OCI-LY7 (cell line): ENCODE measurements at regions of chr11 and their contacts with region 1.

Region 1: GRCh38 chr11:68297812-68298658 is 14.4 kb upstream of the LRP5 start:
- DNase-seq: peak; percentile 73
- H3K4me3 ChIP-seq: no peak overlapping the region
- H3K27ac ChIP-seq: no peak overlapping the region
- H3K4me1 ChIP-seq: peaks cover 35% of the 10 kb centered on the region
- CTCF ChIP-seq: peak; percentile 95

Region 2: GRCh38 chr11:68213555-68214174 is 84.4 kb before region 1 on chr11:
- CTCF ChIA-PET with region 1: interaction called, 3 read pairs
- POLR2A ChIA-PET with region 1: interaction called, 3 read pairs
- intact Hi-C with region 1: loop called (anchors 5 kb)
- DNase-seq: peak; percentile 97
- H3K4me3 ChIP-seq: peak overlapping the region; percentile 82
- H3K27ac ChIP-seq: peak overlapping the region; percentile 73
- H3K4me1 ChIP-seq: peaks cover 30% of the 10 kb centered on the region
- CTCF ChIP-seq: no peak

Region 3: DNA sequence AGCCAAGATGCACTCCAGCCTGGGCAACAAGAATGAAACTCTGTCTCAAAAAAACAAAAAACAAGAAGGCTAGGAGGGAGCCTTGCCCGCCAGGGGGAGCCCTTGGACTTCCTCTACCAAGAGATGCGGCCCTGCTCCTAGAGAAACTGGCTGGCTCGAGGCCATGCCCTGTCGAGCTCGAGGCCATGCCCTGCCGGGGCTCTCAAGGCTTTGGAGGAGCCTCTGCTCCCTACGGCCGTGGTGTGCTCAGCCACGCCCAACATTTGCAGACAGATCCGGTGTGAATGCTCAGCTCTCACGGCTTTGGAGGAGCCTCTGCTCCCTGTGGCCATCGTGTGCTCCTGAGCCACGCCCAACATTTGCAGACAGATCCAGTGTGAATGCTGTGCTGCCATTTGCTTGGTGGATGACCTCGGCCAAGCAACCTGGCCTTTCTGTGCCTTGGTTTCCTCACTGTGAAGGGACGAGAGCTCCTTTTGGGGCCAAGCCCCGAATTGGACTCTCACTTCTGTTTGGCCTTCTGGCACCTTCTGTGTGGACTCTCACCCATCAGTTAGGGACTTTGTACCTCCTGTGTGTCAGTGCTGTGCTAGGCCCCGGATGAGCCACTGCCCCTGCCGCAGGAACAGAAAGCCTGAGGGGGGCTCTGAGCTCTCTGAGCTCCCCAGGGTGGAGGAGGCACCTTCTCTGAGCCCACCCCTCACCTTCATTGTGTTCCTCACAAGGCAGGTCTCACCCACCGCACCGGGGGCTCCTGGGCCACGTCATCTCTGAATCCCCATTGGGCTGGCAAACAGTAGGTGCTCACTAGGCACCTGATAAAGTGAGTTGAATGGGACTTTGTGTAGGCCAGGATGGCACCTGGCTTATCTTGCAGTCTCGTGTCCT is 40.3 kb before region 1 on chr11:
- CTCF ChIA-PET with region 1: interaction called, 26 read pairs
- POLR2A ChIA-PET with region 1: interaction called, 24 read pairs
- intact Hi-C with region 1: loop called (anchors 1 kb)
- DNase-seq: peak; percentile 93
- H3K4me3 ChIP-seq: no peak overlapping the region
- H3K27ac ChIP-seq: no peak overlapping the region
- H3K4me1 ChIP-seq: peaks cover 6% of the 10 kb centered on the region
- CTCF ChIP-seq: peak; percentile 87

Region 4: GRCh38 chr11:68271781-68272608 is 26.0 kb before region 1 on chr11 and contains the start of gene C11orf24:
- CTCF ChIA-PET with region 1: no interaction called
- POLR2A ChIA-PET with region 1: interaction called, 11 read pairs
- intact Hi-C with region 1: loop called (anchors 1 kb)
- DNase-seq: peak; percentile 98
- H3K4me3 ChIP-seq: peak within 1 kb of the TSS; percentile 83
- H3K27ac ChIP-seq: peak within 1 kb of the TSS; percentile 96
- H3K4me1 ChIP-seq: peaks cover 56% of the 10 kb centered on the region
- CTCF ChIP-seq: no peak
- total RNA-seq, gene C11orf24: 53.9 and 81.1 TPM in 2 replicates

Region 5: DNA sequence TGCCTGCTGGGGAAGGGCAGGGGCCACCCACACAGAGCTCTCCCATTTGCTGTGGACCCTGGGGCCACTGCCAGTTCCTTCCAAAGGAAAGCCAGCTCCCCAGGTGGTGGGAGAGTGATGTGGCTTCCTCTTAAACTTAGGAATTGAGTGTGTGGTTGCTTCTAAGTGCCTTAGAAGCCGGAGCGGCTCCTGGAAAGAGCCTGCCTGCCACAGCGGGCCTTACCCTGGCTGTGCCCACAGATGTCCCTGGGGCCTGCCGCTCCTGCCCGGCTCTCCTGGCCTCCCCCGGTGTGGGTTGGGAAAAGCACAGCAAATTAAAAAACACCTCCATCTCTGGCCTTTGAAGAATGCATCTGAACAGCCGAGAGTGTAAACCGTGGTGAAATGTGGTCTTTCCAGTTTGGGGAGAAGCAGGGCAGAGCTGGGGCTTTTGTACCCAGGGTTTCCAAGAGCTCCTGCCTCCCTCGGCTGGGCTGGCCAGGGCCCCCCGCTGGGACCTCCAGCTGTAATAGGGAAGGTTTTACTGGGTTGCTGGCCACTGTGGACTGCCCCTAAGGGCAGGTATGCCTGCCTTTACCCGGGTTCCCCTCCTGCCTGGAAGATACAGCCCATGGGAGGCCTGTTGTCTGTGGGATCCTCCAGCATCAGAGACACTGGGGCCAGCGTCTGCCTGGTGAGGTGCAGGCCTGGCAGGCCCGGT is 44.6 kb after region 1 on chr11:
- CTCF ChIA-PET with region 1: no interaction called
- POLR2A ChIA-PET with region 1: no interaction called
- intact Hi-C with region 1: no loop called
- DNase-seq: no peak
- H3K4me3 ChIP-seq: no peak overlapping the region
- H3K27ac ChIP-seq: no peak overlapping the region
- H3K4me1 ChIP-seq: no peaks in the 10 kb centered on the region
- CTCF ChIP-seq: no peak

Region 6: DNA sequence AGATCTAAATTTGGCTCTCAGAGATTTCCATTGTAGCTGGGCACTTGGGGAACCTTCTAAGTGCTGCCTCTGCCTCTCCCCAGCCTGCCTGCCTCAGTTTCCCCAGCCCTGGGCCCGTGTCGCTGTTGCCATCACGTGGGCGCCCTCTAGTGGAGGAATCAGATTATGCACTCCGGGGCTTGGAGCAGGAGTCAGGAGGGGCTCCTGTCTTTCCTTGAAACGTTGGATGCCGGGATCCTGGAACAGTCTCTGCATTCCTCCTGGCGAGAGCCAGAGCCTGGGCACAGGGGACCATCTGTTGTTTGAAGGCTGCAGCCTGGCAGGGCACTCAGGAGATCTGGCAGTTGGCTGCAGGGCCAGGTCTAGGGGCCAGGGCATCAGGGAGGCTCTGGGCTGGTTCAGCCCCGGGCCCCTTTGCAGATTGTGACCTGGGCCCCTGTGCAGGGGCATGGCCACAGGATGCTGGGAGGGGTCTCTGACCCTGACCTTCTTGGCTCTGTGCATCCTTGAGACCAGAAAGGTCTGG is 86.0 kb after region 1 on chr11:
- CTCF ChIA-PET with region 1: interaction called, 3 read pairs
- POLR2A ChIA-PET with region 1: no interaction called
- intact Hi-C with region 1: loop called (anchors 2 kb)
- DNase-seq: peak; percentile 56
- H3K4me3 ChIP-seq: no peak overlapping the region
- H3K27ac ChIP-seq: no peak overlapping the region
- H3K4me1 ChIP-seq: peaks cover 24% of the 10 kb centered on the region
- CTCF ChIP-seq: peak; percentile 99

Region 7: DNA sequence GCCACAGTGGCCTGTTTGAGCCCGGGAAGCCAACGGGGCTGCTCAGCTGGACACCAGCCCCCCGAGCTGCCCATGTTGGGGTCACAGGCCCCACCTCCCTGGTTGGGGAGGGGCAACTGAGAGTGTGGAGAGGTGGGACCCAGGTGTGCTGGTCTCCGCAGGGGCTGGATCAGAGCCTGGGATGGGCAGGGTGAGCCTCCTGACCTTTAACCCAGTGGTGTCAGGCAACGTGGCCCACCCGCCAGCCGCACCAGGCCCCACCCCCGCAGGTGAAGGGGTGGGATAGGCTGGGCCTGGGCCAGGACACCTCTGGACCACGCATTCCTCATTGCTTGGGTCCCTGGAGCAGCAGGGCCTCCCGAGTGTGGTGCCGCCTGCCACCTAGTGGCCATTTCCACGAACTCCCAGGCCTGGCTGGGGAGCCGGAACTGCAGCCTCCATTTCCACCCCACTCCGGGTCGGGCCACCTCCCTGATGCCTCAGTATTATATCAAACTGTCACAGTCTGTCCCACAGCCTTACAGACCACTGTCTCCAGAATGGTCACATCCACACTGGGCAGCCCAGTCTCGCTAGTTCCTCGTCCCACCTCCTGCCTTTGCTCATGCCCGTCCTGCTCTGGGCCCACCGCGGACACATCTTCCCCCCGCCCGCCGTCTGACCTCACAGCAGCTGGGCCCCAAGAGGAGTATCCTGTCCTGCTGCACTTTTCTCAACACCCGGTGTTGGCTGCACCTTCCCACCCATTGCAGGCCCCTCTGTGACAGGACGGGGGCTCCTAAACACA is 149.2 kb after region 1 on chr11:
- CTCF ChIA-PET with region 1: interaction called, 3 read pairs
- POLR2A ChIA-PET with region 1: no interaction called
- intact Hi-C with region 1: loop called (anchors 1 kb)
- DNase-seq: peak; percentile 78
- H3K4me3 ChIP-seq: no peak overlapping the region
- H3K27ac ChIP-seq: no peak overlapping the region
- H3K4me1 ChIP-seq: peaks cover 5% of the 10 kb centered on the region
- CTCF ChIP-seq: peak; percentile 92